Caco-2 (cell line): ENCODE measurements at regions of chr1 and their contacts with region 1.

Region 1: GRCh38 chr1:201114236-201115131 is 2.3 kb upstream of the CACNA1S start:
- DNase-seq: peak; percentile 86 to 87
- H3K4me3 ChIP-seq: no peak overlapping the region
- H3K4me3 Mint-ChIP-seq: peak overlapping the region; percentile 24
- H3K27ac Mint-ChIP-seq: no peak overlapping the region
- H3K4me1 ChIP-seq: 0 out of 2 replicates have a peak, but pooled peaks cover 9% of the 10 kb centered on the region
- H3K4me1 Mint-ChIP-seq: peaks cover 15% of the 10 kb centered on the region
- H3K27me3 ChIP-seq: no peaks in the 10 kb centered on the region
- H3K27me3 Mint-ChIP-seq: no peaks in the 10 kb centered on the region
- CTCF ChIP-seq: peak; percentile 85 to 90

Region 2: DNA sequence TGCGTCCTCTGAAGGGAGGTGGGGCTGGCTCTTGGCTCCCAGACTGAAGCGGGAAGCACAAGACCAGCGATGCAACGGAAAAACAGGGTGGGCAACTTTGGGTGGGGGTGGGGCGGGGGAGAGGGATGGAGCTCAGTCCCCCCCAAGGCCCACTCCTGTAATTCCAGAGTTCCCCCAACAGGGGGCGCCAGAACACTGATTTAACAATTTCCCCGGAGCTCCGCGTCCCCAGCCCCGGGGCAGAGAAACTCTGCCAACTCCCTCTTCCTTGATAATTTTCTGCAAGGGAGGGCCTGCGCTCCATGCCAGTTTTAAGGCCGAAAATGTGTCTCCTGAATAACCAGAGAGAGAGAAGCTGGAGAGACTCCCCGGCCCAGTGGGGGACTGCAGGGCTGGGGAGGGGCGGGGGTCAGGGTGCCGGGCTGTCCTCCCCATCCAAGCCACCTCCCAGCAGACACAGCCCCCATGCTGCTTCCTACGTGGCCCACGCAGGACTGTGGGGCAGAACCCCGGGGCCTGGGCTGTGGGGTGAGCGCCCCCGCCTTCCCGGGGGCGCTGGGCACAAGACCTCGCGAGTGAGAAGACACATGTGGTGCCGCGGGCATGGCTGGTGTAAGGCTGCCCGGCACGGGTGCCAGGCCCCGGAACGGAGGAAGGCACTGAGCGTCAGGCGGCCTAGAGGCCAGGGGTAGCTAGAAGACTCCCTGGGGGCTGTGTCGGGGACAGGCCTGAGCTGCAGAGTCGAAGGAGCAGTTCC is 142.4 kb before region 1 on chr1:
- CTCF ChIA-PET with region 1: interaction called, 8 read pairs
- POLR2A ChIA-PET with region 1: no interaction called
- intact Hi-C with region 1: loop called (anchors 1 kb)
- DNase-seq: peak; percentile 50 to 67
- H3K4me3 ChIP-seq: no peak overlapping the region
- H3K4me3 Mint-ChIP-seq: no peak overlapping the region
- H3K27ac Mint-ChIP-seq: no peak overlapping the region
- H3K4me1 ChIP-seq: no peaks in the 10 kb centered on the region
- H3K4me1 Mint-ChIP-seq: no peaks in the 10 kb centered on the region
- H3K27me3 ChIP-seq: no peaks in the 10 kb centered on the region
- H3K27me3 Mint-ChIP-seq: no peaks in the 10 kb centered on the region
- CTCF ChIP-seq: peak; percentile 60 to 94

Region 3: DNA sequence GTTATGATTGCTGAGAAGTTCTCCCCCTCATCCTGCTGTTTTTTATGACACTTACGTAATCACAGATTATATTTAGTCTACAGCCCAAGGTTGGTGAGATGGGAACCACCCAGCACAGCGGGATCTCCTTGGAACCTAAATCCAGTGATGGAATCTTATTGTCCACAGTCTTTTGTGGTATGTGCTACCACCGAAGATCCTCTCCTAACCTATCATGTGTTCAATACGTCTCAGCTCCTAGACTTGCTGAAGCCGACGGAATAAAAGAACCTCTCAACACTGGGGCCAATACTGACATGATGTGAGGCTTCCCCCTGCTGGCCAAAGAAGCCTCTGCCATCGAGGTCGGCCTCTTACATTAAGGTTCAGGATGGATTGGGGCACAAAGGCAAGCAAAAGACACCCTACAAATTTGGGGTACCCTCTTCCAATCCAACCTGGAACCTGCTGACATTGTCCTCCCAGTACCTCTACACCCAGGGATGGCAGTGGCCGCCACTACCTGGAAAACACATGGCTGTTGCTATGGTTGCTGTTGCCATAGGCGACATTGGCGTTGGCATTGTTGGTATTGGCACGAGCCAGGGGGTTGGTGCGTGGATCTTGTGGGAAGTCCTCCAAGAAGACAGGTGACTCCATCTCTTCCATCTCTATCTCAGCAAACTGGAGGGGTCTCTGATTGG is 71.6 kb before region 1 on chr1:
- CTCF ChIA-PET with region 1: interaction called, 3 read pairs
- POLR2A ChIA-PET with region 1: no interaction called
- intact Hi-C with region 1: loop called (anchors 5 kb)
- DNase-seq: peak; percentile 67 to 73
- H3K4me3 ChIP-seq: no peak overlapping the region
- H3K4me3 Mint-ChIP-seq: no peak overlapping the region
- H3K27ac Mint-ChIP-seq: no peak overlapping the region
- H3K4me1 ChIP-seq: no peaks in the 10 kb centered on the region
- H3K4me1 Mint-ChIP-seq: no peaks in the 10 kb centered on the region
- H3K27me3 ChIP-seq: no peaks in the 10 kb centered on the region
- H3K27me3 Mint-ChIP-seq: peaks cover 2% of the 10 kb centered on the region
- CTCF ChIP-seq: peak; percentile 83 to 85

Region 4: GRCh38 chr1:201085916-201086735 is 28.4 kb before region 1 on chr1:
- CTCF ChIA-PET with region 1: interaction called, 15 read pairs
- POLR2A ChIA-PET with region 1: interaction called, 7 read pairs
- intact Hi-C with region 1: loop called (anchors 1 kb)
- DNase-seq: peak; percentile 65 to 76
- H3K4me3 ChIP-seq: no peak overlapping the region
- H3K4me3 Mint-ChIP-seq: no peak overlapping the region
- H3K27ac Mint-ChIP-seq: no peak overlapping the region
- H3K4me1 ChIP-seq: no peaks in the 10 kb centered on the region
- H3K4me1 Mint-ChIP-seq: peaks cover 11% of the 10 kb centered on the region
- H3K27me3 ChIP-seq: no peaks in the 10 kb centered on the region
- H3K27me3 Mint-ChIP-seq: no peaks in the 10 kb centered on the region
- CTCF ChIP-seq: peak; percentile 76 to 86

Region 5: GRCh38 chr1:201184307-201185122 is 70.0 kb after region 1 on chr1:
- CTCF ChIA-PET with region 1: no interaction called
- POLR2A ChIA-PET with region 1: no interaction called
- intact Hi-C with region 1: no loop called
- DNase-seq: peak; percentile 68 to 70
- H3K4me3 ChIP-seq: no peak overlapping the region
- H3K4me3 Mint-ChIP-seq: no peak overlapping the region
- H3K27ac Mint-ChIP-seq: no peak overlapping the region
- H3K4me1 ChIP-seq: no peaks in the 10 kb centered on the region
- H3K4me1 Mint-ChIP-seq: peaks cover 8% of the 10 kb centered on the region
- H3K27me3 ChIP-seq: no peaks in the 10 kb centered on the region; the same call in 1 of the 2 replicates
- H3K27me3 Mint-ChIP-seq: peaks cover 3% of the 10 kb centered on the region
- CTCF ChIP-seq: peak; percentile 69 to 86